ENCODE measurements at regions of chr5 and their contacts with region 1.

Region 1: GRCh38 chr5:10505517-10506095 is 58.3 kb upstream of the ANKRD33B start:
- DNase-seq: no peak
- ATAC-seq: peak; percentile 98
- H3K4me3 Mint-ChIP-seq: peak overlapping the region; percentile 8
- H3K27ac Mint-ChIP-seq: peak overlapping the region; percentile 76
- H3K4me1 Mint-ChIP-seq: peaks cover 13% of the 10 kb centered on the region
- H3K27me3 Mint-ChIP-seq: no peaks in the 10 kb centered on the region
- CTCF ChIP-seq: no peak

Region 2: GRCh38 chr5:10489810-10490426 is 15.7 kb before region 1 on chr5:
- CTCF ChIA-PET with region 1: interaction called, 4 read pairs
- POLR2A ChIA-PET with region 1: interaction called, 5 read pairs
- intact Hi-C with region 1: loop called (anchors 1 kb)
- DNase-seq: no peak
- ATAC-seq: peak; percentile 98
- H3K4me3 Mint-ChIP-seq: peak overlapping the region; percentile 58
- H3K27ac Mint-ChIP-seq: peak overlapping the region; percentile 56
- H3K4me1 Mint-ChIP-seq: peaks cover 47% of the 10 kb centered on the region
- H3K27me3 Mint-ChIP-seq: no peaks in the 10 kb centered on the region
- CTCF ChIP-seq: no peak

Region 3: DNA sequence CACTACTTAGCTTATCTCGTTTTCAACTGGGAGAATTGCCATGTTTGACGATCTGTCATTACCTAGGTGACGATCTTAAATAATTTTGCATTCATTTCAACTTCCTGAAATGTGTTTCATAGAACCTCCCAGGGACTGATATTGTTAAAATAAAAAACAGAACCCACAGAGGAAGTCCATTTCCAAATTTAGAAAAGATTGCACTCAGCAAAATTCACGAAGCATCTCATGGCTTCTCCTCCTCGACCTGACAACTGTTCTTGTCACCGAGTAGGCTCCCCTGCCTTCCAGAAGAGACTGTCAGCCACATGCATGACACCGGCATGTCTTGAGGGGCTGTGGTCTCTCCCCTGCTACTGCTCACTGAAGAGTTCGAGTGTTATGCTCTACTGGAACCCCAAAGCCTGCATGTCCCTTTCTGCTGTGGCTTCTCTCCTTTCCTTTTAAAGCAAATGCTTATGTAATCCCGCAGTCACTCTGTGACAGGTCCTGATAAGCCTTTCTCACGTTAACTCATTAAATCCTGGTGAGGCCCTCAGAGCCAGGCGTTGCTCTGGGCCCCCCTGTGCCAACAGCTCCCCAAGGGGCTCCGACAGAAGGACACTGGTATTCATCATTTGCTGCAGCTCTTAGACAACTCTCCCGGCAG is 31.4 kb after region 1 on chr5:
- CTCF ChIA-PET with region 1: no interaction called
- POLR2A ChIA-PET with region 1: no interaction called
- intact Hi-C with region 1: loop called (anchors 2 kb)
- DNase-seq: no peak
- ATAC-seq: peak; percentile 79
- H3K4me3 Mint-ChIP-seq: peak overlapping the region; percentile 76
- H3K27ac Mint-ChIP-seq: peak overlapping the region; percentile 75
- H3K4me1 Mint-ChIP-seq: peaks cover 26% of the 10 kb centered on the region
- H3K27me3 Mint-ChIP-seq: peaks cover 2% of the 10 kb centered on the region
- CTCF ChIP-seq: no peak

Region 4: GRCh38 chr5:10607666-10608073 is 102.1 kb after region 1 on chr5:
- CTCF ChIA-PET with region 1: no interaction called
- POLR2A ChIA-PET with region 1: no interaction called
- intact Hi-C with region 1: loop called (anchors 2 kb)
- DNase-seq: no peak
- ATAC-seq: peak; percentile 35
- H3K4me3 Mint-ChIP-seq: peak overlapping the region; percentile 80
- H3K27ac Mint-ChIP-seq: peak overlapping the region; percentile 90
- H3K4me1 Mint-ChIP-seq: peaks cover 67% of the 10 kb centered on the region
- H3K27me3 Mint-ChIP-seq: no peaks in the 10 kb centered on the region
- CTCF ChIP-seq: no peak